ENCODE measurements at regions of chr15 and their contacts with region 1.

Region 1: GRCh38 chr15:57306161-57306943 is 70.0 kb upstream of the CGNL1 start:
- DNase-seq: peak; percentile 91
- CTCF ChIP-seq: peak; percentile 91

Region 2: DNA sequence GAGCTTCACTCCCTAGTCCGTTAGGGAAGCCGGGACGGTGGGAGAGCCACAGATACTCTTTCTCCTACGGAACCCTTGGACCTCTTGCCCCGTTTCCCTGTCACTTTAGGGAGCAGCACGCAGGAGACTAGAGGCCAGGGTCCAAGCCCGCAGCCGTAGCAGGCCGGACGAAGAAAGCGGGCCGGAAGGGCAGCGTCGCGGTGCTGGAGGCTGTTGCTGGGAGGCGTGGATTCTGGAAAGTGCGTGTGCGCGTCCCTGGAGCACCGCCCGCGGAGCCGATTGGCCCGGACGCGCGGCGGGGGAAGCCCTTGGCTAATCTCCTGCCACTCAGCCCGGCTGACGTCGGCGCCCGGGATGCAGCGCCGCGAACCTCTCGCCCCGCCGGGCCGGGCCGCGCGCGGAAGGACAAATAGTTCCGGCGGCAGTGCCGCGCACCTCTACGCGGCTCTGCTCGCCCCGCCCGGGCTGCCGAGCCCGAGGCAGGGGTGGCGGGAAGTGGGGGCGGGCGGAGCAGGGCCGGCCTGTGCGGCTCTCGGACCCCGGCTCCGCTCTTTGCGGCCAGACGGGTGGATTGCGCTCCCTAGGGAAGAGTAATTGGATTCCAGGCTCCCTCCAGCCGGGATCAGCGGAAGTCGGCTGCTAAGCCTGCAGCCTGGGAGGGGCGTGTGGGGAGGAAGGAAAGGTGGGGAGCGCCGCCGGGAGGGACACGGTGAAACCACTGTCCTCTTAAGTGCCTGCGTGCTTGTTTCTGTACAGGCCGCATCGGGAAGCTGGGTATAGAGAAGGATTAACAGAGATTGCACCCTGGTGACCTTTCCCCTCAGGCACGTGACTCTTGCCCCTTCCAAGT is 419.2 kb before region 1 on chr15:
- in situ Hi-C with region 1: loop called (anchors 25 kb)
- DNase-seq: peak; percentile 90
- CTCF ChIP-seq: no peak

Region 3: DNA sequence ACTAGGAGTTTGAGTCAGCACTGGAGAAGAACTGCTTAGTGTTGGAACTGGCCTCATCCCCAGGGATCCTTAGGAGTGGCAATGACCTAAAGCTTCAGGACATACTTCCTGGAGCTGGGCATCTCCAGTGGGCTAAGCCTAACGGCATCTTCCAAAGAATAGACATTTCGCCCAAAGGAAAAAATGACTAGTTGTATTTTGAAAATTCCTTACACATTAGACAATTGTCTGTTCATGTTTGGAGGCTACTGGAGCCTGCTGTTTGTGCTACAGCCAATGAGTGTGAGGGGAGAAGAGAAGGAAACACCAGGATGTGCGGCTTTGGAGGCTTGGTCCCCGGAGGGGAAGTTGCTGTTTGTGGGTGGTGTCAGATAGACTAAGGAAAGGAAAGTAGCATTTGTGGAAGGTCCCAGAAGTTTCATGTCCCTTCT is 477.7 kb after region 1 on chr15:
- in situ Hi-C with region 1: no loop called
- DNase-seq: no peak
- CTCF ChIP-seq: no peak

Measured in GM13977 (cell line).